HEK293 (cell line): ENCODE measurements at regions of chr17 and their contacts with region 1.

Region 1: GRCh38 chr17:34171245-34171818 is 83.8 kb upstream of the CCL2 start:
- H3K4me3 ChIP-seq: no peak overlapping the region
- H3K27ac ChIP-seq: no peak overlapping the region
- H3K4me1 ChIP-seq: peaks cover 5% of the 10 kb centered on the region; the same call in 1 of the 2 replicates
- CTCF ChIP-seq: peak; percentile 41; the same call in 1 of the 2 replicates

Region 2: DNA sequence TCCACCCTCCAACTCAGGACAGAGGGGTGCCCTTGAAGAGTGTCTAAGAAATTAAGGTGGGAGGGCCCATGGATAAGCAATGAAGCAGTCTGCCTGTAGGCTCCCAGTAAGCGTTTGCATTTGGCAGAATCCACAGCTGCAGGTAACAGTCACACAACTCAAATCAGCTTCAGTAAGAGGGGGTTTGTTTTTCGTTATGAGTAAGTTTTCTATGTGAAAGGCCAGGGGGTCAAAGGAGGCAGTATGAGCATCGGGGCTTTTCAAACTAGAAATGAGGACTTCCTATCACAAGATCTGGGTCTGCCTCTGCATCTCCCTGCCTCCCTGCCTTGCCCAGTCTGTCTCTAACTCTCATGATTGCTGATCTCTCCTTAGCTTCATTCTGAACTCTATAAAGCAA is 44.4 kb before region 1 on chr17:
- CTCF ChIA-PET with region 1: no interaction called
- POLR2A ChIA-PET with region 1: no interaction called
- H3K4me3 ChIP-seq: no peak overlapping the region
- H3K27ac ChIP-seq: no peak overlapping the region
- H3K4me1 ChIP-seq: no peaks in the 10 kb centered on the region
- CTCF ChIP-seq: no peak

Region 3: DNA sequence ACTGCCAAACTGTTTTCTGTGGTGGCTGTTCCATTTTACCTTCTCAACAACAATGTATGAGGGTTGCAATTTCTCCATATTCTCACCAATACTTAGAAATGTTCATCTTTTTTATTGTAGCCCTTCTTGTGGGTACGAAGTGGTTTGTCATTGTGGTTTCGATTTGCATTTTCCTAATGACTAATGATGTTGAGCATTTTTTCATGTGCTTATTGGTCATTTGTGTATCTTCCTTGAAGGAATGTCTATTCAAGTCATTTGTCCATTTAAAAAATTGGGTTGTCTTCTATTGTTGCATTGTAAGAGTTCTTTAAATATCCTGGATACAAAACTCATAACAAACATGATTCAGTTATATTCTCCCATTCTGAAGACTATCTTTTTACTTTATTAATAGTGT is 36.2 kb after region 1 on chr17:
- CTCF ChIA-PET with region 1: interaction called, 12 read pairs
- POLR2A ChIA-PET with region 1: no interaction called
- H3K4me3 ChIP-seq: no peak overlapping the region
- H3K27ac ChIP-seq: no peak overlapping the region
- H3K4me1 ChIP-seq: no peaks in the 10 kb centered on the region
- CTCF ChIP-seq: no peak